ENCODE measurements at regions of chr20 and their contacts with region 1.

Region 1: DNA sequence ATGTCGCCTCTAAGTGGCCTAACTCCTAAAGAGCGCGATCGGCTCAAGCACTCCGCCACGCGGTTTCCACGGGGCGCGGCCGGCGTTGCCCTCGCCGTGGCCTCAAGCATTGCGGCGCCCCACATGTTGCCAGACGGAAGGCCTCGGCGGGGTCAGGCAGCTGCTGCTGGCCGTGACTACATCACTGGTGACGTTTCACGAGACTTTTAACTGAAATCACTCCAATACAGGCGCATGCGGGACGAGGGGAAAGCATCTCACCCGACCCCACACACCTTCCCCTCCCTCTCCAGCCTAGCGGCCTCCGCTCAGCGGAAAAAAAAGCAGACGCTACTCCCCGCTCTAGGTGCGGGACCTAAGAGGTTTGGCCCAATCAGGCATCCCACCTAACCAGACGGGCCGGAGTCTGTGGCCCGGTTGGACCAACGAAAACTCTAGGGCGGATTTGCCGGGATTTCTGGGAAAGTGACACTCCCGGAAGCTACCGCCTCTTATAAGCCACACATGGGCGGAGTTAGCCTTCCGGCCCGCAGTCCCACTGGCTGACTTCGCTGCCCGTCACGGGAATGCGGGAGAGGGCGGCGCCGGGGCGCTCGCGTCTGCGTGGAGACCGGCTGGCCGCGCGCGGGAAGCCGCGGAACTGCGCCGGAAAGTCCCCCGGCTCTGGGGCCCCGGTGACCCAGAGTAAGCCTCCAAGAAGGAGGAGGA is at the start of gene NXT1:
- DNase-seq: peak; percentile 96 to 97 (median 97)
- H3K4me3 ChIP-seq: peak within 1 kb of the TSS; percentile 57 to 93 (median 81)
- H3K4me3 Mint-ChIP-seq: peak within 1 kb of the TSS; percentile 92 to 93
- H3K27ac ChIP-seq: peak within 1 kb of the TSS; percentile 96 to 97
- H3K27ac Mint-ChIP-seq: peak within 1 kb of the TSS; percentile 99 to 100 (median 100)
- H3K4me1 ChIP-seq: peaks cover 22 to 28% of the 10 kb centered on the region in 2 donors
- H3K4me1 Mint-ChIP-seq: peaks cover 22% of the 10 kb centered on the region
- H3K27me3 ChIP-seq: no peaks in the 10 kb centered on the region
- H3K27me3 Mint-ChIP-seq: no peaks in the 10 kb centered on the region
- CTCF ChIP-seq: no peak
- polyA plus RNA-seq, gene NXT1: 37.8 to 140 (median 39.4) TPM

Region 2: DNA sequence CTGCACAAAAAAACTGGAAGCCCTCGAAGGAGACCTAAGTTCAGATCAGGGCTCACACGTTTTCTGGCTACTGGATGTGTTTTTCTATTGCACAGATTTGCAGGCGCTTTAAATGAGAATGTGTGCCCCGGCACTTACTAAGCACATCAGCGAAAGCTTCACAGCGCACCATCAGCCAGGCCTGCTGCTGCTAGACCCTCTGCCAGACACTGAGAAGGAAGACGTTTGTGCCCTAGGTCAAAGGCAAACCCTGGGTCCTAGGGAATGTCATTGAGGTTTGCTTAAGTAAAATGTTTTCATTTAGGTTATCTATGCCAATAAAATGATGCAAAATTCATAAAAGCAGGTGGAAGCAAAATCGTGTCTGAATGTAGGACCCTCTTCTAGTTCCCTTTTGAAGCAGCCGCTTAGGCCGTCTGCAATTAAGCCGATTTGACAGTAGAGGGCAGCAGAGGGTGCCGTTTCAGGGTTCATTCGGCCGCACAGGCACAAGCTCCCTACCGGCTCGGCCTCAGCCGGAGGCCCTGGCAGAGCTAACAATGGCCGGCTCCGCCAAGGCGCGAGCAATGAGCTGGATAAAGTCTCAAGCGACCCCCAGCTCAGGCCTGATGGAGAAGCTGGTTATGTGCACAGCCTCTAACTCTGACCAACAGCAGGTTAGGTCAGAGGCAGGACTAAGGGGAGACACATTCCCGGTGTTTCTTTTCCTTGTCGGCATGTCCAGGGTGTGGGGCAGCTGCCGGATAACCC is 658.8 kb before region 1 on chr20:
- intact Hi-C with region 1: loop called in 1 of 2 experiments (anchors 10 kb)
- DNase-seq: peak; percentile 62 to 74 (median 73)
- H3K4me3 ChIP-seq: no peak overlapping the region
- H3K4me3 Mint-ChIP-seq: no peak overlapping the region
- H3K27ac ChIP-seq: no peak overlapping the region
- H3K27ac Mint-ChIP-seq: peak overlapping the region in 2 of 7 donors; percentile 35 to 54
- H3K4me1 ChIP-seq: peaks cover 25 to 38% of the 10 kb centered on the region in 2 donors
- H3K4me1 Mint-ChIP-seq: peaks cover 32% of the 10 kb centered on the region
- H3K27me3 ChIP-seq: no peaks in the 10 kb centered on the region
- H3K27me3 Mint-ChIP-seq: no peaks in the 10 kb centered on the region
- CTCF ChIP-seq: peak; percentile 92

Region 3: GRCh38 chr20:22890594-22891300 is 459.6 kb before region 1 on chr20:
- intact Hi-C with region 1: no loop called
- DNase-seq: no peak
- H3K4me3 ChIP-seq: no peak overlapping the region
- H3K4me3 Mint-ChIP-seq: no peak overlapping the region
- H3K27ac ChIP-seq: no peak overlapping the region
- H3K27ac Mint-ChIP-seq: no peak overlapping the region
- H3K4me1 ChIP-seq: no peaks in the 10 kb centered on the region
- H3K4me1 Mint-ChIP-seq: no peaks in the 10 kb centered on the region
- H3K27me3 ChIP-seq: no peaks in the 10 kb centered on the region
- H3K27me3 Mint-ChIP-seq: peaks cover 1 to 14% (median 2%) of the 10 kb centered on the region in 3 donors
- CTCF ChIP-seq: no peak

Region 4: GRCh38 chr20:22984606-22985005 is 365.7 kb before region 1 on chr20:
- intact Hi-C with region 1: no loop called
- DNase-seq: peak; percentile 18 to 39 (median 38)
- H3K4me3 ChIP-seq: peak overlapping the region in 1 of 3 experiments; percentile 42
- H3K4me3 Mint-ChIP-seq: peak overlapping the region; percentile 55 to 82
- H3K27ac ChIP-seq: no peak overlapping the region
- H3K27ac Mint-ChIP-seq: no peak overlapping the region
- H3K4me1 ChIP-seq: peaks cover 28 to 32% of the 10 kb centered on the region in 2 donors
- H3K4me1 Mint-ChIP-seq: peaks cover 33% of the 10 kb centered on the region
- H3K27me3 ChIP-seq: no peaks in the 10 kb centered on the region
- H3K27me3 Mint-ChIP-seq: peaks cover 1 to 13% (median 12%) of the 10 kb centered on the region in 3 donors
- CTCF ChIP-seq: no peak

Region 5: DNA sequence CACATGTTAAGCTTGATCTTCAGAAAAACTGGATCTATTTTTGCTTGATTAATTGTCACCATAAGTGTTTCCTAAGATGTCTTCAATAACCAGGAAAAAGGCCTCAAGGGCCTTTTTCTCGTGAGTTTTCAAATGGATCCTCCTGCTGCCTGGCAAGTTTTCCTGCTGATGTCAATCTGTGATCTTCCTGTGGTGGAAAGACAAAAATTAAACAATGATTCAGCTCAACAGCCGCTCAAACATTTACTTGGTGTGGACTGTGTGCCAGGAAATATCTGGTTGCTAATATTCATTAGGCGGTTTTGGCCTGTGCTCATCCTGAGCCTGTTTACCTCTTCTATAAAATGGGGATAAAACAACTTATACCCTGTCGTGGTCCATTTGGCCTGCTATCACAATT is 350.6 kb before region 1 on chr20:
- intact Hi-C with region 1: no loop called
- DNase-seq: no peak
- H3K4me3 ChIP-seq: no peak overlapping the region
- H3K4me3 Mint-ChIP-seq: no peak overlapping the region
- H3K27ac ChIP-seq: no peak overlapping the region
- H3K27ac Mint-ChIP-seq: no peak overlapping the region
- H3K4me1 ChIP-seq: no peaks in the 10 kb centered on the region
- H3K4me1 Mint-ChIP-seq: peaks cover 11% of the 10 kb centered on the region
- H3K27me3 ChIP-seq: no peaks in the 10 kb centered on the region
- H3K27me3 Mint-ChIP-seq: peaks cover 2 to 7% (median 4%) of the 10 kb centered on the region in 3 donors
- CTCF ChIP-seq: no peak

Region 6: GRCh38 chr20:23027721-23028120 is 322.6 kb before region 1 on chr20:
- intact Hi-C with region 1: loop called in 1 of 2 experiments (anchors 10 kb)
- DNase-seq: peak; percentile 44 to 85 (median 67)
- H3K4me3 ChIP-seq: peak overlapping the region in 1 of 3 experiments; percentile 37
- H3K4me3 Mint-ChIP-seq: no peak overlapping the region
- H3K27ac ChIP-seq: peak overlapping the region; percentile 55 to 67
- H3K27ac Mint-ChIP-seq: peak overlapping the region; percentile 75 to 85 (median 83)
- H3K4me1 ChIP-seq: peaks cover 42 to 56% of the 10 kb centered on the region in 2 donors
- H3K4me1 Mint-ChIP-seq: peaks cover 61% of the 10 kb centered on the region
- H3K27me3 ChIP-seq: no peaks in the 10 kb centered on the region
- H3K27me3 Mint-ChIP-seq: peaks cover 0 to 5% (median 1%) of the 10 kb centered on the region in 3 donors
- CTCF ChIP-seq: no peak

Region 7: GRCh38 chr20:23331450-23332350 is 18.6 kb before region 1 on chr20:
- intact Hi-C with region 1: loop called in 1 of 2 experiments (anchors 2 kb)
- DNase-seq: no peak
- H3K4me3 ChIP-seq: no peak overlapping the region
- H3K4me3 Mint-ChIP-seq: no peak overlapping the region
- H3K27ac ChIP-seq: no peak overlapping the region
- H3K27ac Mint-ChIP-seq: peak overlapping the region in 1 of 7 donors; percentile 65
- H3K4me1 ChIP-seq: no peaks in the 10 kb centered on the region
- H3K4me1 Mint-ChIP-seq: peaks cover 17% of the 10 kb centered on the region
- H3K27me3 ChIP-seq: no peaks in the 10 kb centered on the region
- H3K27me3 Mint-ChIP-seq: peaks cover 0 to 4% (median 2%) of the 10 kb centered on the region in 3 donors
- CTCF ChIP-seq: no peak

Region 8: DNA sequence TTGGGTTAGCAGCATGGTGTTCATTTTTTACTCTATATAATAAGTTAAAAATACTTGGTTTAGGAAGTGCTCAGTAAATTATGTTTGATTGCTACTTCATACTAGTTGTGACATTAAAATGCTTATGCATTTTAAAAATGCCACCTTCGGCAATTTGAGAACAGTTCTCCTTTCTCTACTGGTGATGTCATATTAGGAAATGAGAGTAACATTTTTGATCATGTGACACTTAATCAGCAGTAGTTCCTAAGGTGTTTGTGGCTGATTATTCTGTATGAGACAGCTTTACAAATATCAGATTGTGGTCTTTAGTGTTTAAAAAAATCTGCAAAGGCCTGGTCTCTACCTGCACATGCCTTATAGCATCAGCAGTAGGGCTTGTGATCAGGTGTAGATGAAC is 16.0 kb after region 1 on chr20:
- intact Hi-C with region 1: loop called in 1 of 2 experiments (anchors 2 kb)
- DNase-seq: peak; percentile 58 to 89 (median 85)
- H3K4me3 ChIP-seq: peak overlapping the region in 1 of 3 experiments; percentile 52
- H3K4me3 Mint-ChIP-seq: peak overlapping the region in 1 of 2 donors; percentile 75
- H3K27ac ChIP-seq: peak overlapping the region; percentile 63 to 65
- H3K27ac Mint-ChIP-seq: peak overlapping the region; percentile 90 to 96 (median 95)
- H3K4me1 ChIP-seq: peaks cover 38 to 52% of the 10 kb centered on the region in 2 donors
- H3K4me1 Mint-ChIP-seq: peaks cover 50% of the 10 kb centered on the region
- H3K27me3 ChIP-seq: no peaks in the 10 kb centered on the region
- H3K27me3 Mint-ChIP-seq: peaks cover 0 to 3% (median 3%) of the 10 kb centered on the region in 3 donors
- CTCF ChIP-seq: no peak

Region 9: DNA sequence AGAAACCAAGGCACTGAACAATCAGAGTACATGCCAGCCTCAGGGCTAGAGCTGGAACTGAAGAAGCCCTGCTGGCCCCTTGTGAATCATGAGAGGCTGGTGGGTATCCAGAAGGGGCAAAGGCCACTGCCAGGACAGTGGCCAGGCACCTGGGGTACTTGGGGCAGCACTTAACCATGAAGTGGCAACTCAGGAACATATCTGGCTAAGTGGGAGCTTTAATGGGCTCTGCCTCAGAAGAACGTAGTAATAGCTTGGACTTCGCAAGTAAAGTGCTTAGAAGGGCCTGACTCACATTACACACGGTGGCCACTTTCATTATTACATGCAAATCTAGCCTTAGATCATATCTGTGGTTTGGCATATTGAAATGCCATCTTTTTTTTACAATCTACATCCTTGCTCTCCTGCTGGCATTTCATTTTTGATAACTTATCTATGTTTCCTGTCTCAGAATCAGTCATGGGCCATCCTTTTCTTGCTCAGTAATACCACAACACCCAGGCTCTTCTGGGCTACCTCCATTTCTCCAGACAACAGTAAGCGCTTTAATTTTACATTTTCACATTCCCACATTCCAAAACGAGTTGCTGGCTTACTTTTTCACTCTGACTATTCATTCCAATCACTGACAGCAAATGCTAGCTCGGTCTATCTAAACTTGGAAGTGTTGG is 49.4 kb after region 1 on chr20:
- intact Hi-C with region 1: loop called in 1 of 2 experiments (anchors 10 kb)
- DNase-seq: no peak
- H3K4me3 ChIP-seq: no peak overlapping the region
- H3K4me3 Mint-ChIP-seq: no peak overlapping the region
- H3K27ac ChIP-seq: no peak overlapping the region
- H3K27ac Mint-ChIP-seq: peak overlapping the region in 1 of 7 donors; percentile 7
- H3K4me1 ChIP-seq: peaks cover 8 to 10% of the 10 kb centered on the region in 2 donors
- H3K4me1 Mint-ChIP-seq: peaks cover 17% of the 10 kb centered on the region
- H3K27me3 ChIP-seq: no peaks in the 10 kb centered on the region
- H3K27me3 Mint-ChIP-seq: peaks cover 0 to 3% (median 0%) of the 10 kb centered on the region in 3 donors
- CTCF ChIP-seq: peak; percentile 23

Measured in CD14-positive monocyte (primary cell).